IMR-90 (cell line): ENCODE measurements at regions of chr3 and their contacts with region 1.

Region 1: DNA sequence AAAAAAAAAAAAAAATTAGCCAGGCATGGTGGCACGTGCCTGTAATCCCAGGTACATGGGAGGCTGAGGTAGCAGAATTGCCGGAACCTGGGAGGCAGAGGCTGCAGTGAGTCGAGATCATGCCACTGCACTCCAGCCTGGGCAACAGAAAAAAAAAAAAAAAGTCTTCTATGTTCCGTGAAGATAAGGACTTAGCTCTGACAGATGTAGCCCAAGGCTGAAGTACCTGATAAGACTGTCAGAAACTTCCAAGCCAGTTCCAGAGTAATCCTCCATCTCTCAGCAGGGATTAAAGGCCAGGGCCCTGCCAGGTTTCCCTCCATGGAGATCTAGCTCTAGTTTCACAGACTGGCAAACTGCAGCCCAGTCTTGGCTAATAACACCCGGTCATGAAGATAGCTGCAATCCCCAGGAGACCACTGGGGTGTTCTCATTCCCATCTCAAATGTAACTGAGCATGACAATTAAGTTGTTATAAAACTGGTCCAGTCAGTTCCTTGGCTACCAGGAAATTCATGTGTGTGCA is 8.5 kb downstream of the CDCP1 start:
- DNase-seq: no peak
- ATAC-seq: no peak
- H3K4me3 ChIP-seq: no peak overlapping the region
- H3K27ac ChIP-seq: peak overlapping the region; percentile 41
- H3K4me1 ChIP-seq: peaks cover 25% of the 10 kb centered on the region
- H3K27me3 ChIP-seq: no peaks in the 10 kb centered on the region
- CTCF ChIP-seq: no peak
- POLR2A ChIP-seq: no peak
- RAD21 ChIP-seq: no peak

Region 2: DNA sequence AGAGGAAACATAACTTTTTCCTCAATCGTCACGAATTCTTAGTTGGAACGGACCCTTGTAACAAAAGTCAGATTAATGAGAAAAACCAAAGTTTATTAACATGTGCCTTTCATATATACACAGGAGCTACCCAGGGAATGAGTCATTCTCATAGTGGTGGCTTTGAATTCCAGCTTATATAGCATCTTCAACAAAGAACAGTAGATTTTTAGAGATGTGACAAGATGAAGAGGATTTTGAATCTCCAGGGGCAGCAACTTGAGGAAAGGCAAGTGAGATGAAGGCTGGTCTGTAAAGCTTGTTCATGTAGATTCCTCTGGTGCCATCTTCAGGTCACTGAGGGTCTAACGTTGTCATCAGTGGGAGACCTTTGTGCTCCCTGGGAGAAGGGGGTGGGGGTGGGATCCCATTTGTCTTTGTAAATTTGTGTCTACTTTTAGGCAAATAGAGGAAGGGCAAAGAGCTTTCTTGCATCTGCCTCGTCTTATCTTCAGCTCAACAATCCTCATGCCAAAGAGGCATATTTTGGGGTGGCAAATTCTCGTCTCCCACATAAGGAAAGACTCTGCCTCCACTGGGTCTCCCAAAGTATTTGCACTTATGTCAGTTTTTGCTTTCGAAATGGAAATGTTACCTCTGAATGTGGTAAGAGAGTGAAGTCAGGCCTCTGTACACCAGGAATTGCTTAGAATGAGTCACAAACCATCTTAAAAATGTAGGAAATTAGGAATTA is 82.1 kb before region 1 on chr3:
- CTCF ChIA-PET with region 1: no interaction called
- POLR2A ChIA-PET with region 1: no interaction called
- dilution Hi-C with region 1: no loop called
- in situ Hi-C with region 1: no loop called
- intact Hi-C with region 1: loop called (anchors 1 kb)
- DNase-seq: peak; percentile 96
- ATAC-seq: peak; percentile 68
- H3K4me3 ChIP-seq: peak overlapping the region; percentile 44; the same call in 1 of the 2 replicates
- H3K27ac ChIP-seq: peak overlapping the region; percentile 98
- H3K4me1 ChIP-seq: peaks cover 21% of the 10 kb centered on the region
- H3K27me3 ChIP-seq: no peaks in the 10 kb centered on the region
- CTCF ChIP-seq: peak; percentile 20; the same call in 1 of the 2 replicates
- POLR2A ChIP-seq: no peak
- RAD21 ChIP-seq: no peak

Region 3: GRCh38 chr3:45075821-45076625 is 61.7 kb before region 1 on chr3:
- CTCF ChIA-PET with region 1: no interaction called
- POLR2A ChIA-PET with region 1: no interaction called
- dilution Hi-C with region 1: no loop called
- in situ Hi-C with region 1: no loop called
- intact Hi-C with region 1: no loop called
- DNase-seq: no peak
- ATAC-seq: no peak
- H3K4me3 ChIP-seq: no peak overlapping the region
- H3K27ac ChIP-seq: no peak overlapping the region
- H3K4me1 ChIP-seq: no peaks in the 10 kb centered on the region
- H3K27me3 ChIP-seq: no peaks in the 10 kb centered on the region
- CTCF ChIP-seq: no peak
- POLR2A ChIP-seq: no peak
- RAD21 ChIP-seq: no peak

Region 4: GRCh38 chr3:45100981-45101407 is 36.7 kb before region 1 on chr3:
- CTCF ChIA-PET with region 1: no interaction called
- POLR2A ChIA-PET with region 1: no interaction called
- dilution Hi-C with region 1: no loop called
- in situ Hi-C with region 1: no loop called
- intact Hi-C with region 1: no loop called
- DNase-seq: peak; percentile 74
- ATAC-seq: peak; percentile 53
- H3K4me3 ChIP-seq: no peak overlapping the region
- H3K27ac ChIP-seq: no peak overlapping the region
- H3K4me1 ChIP-seq: peaks cover 7% of the 10 kb centered on the region; the same call in 1 of the 2 replicates
- H3K27me3 ChIP-seq: no peaks in the 10 kb centered on the region
- CTCF ChIP-seq: no peak
- POLR2A ChIP-seq: no peak
- RAD21 ChIP-seq: no peak

Region 5: GRCh38 chr3:45199837-45200648 is 62.3 kb after region 1 on chr3:
- CTCF ChIA-PET with region 1: interaction called, 3 read pairs
- POLR2A ChIA-PET with region 1: no interaction called
- dilution Hi-C with region 1: no loop called
- in situ Hi-C with region 1: loop called (anchors 5 kb)
- intact Hi-C with region 1: loop called (anchors 5 kb)
- DNase-seq: peak; percentile 92
- ATAC-seq: peak; percentile 84
- H3K4me3 ChIP-seq: no peak overlapping the region
- H3K27ac ChIP-seq: peak overlapping the region; percentile 59
- H3K4me1 ChIP-seq: peaks cover 20% of the 10 kb centered on the region
- H3K27me3 ChIP-seq: no peaks in the 10 kb centered on the region
- CTCF ChIP-seq: no peak
- POLR2A ChIP-seq: no peak
- RAD21 ChIP-seq: no peak

Region 6: GRCh38 chr3:45205126-45205525 is 67.4 kb after region 1 on chr3:
- CTCF ChIA-PET with region 1: interaction called, 3 read pairs
- POLR2A ChIA-PET with region 1: no interaction called
- dilution Hi-C with region 1: no loop called
- in situ Hi-C with region 1: loop called (anchors 5 kb)
- intact Hi-C with region 1: loop called (anchors 5 kb)
- DNase-seq: peak; percentile 82
- ATAC-seq: peak; percentile 51
- H3K4me3 ChIP-seq: no peak overlapping the region
- H3K27ac ChIP-seq: no peak overlapping the region
- H3K4me1 ChIP-seq: peaks cover 20% of the 10 kb centered on the region
- H3K27me3 ChIP-seq: no peaks in the 10 kb centered on the region
- CTCF ChIP-seq: no peak
- POLR2A ChIP-seq: no peak
- RAD21 ChIP-seq: no peak

Region 7: GRCh38 chr3:45210308-45211041 is 72.8 kb after region 1 on chr3:
- CTCF ChIA-PET with region 1: no interaction called
- POLR2A ChIA-PET with region 1: no interaction called
- dilution Hi-C with region 1: no loop called
- in situ Hi-C with region 1: loop called (anchors 5 kb)
- intact Hi-C with region 1: loop called (anchors 5 kb)
- DNase-seq: peak; percentile 80
- ATAC-seq: peak; percentile 94
- H3K4me3 ChIP-seq: no peak overlapping the region
- H3K27ac ChIP-seq: peak overlapping the region; percentile 53
- H3K4me1 ChIP-seq: peaks cover 16% of the 10 kb centered on the region
- H3K27me3 ChIP-seq: no peaks in the 10 kb centered on the region
- CTCF ChIP-seq: peak; percentile 87
- POLR2A ChIP-seq: no peak
- RAD21 ChIP-seq: peak; percentile 92

Region 8: GRCh38 chr3:45409921-45410320 is 272.2 kb after region 1 on chr3:
- CTCF ChIA-PET with region 1: no interaction called
- POLR2A ChIA-PET with region 1: no interaction called
- dilution Hi-C with region 1: no loop called
- in situ Hi-C with region 1: no loop called
- intact Hi-C with region 1: no loop called
- DNase-seq: no peak
- ATAC-seq: no peak
- H3K4me3 ChIP-seq: no peak overlapping the region
- H3K27ac ChIP-seq: no peak overlapping the region
- H3K4me1 ChIP-seq: no peaks in the 10 kb centered on the region
- H3K27me3 ChIP-seq: no peaks in the 10 kb centered on the region
- CTCF ChIP-seq: no peak
- POLR2A ChIP-seq: no peak
- RAD21 ChIP-seq: no peak

Region 9: GRCh38 chr3:45479621-45480035 is 341.9 kb after region 1 on chr3:
- CTCF ChIA-PET with region 1: no interaction called
- POLR2A ChIA-PET with region 1: no interaction called
- dilution Hi-C with region 1: no loop called
- in situ Hi-C with region 1: no loop called
- intact Hi-C with region 1: no loop called
- DNase-seq: peak; percentile 79
- ATAC-seq: peak; percentile 86
- H3K4me3 ChIP-seq: no peak overlapping the region
- H3K27ac ChIP-seq: peak overlapping the region; percentile 72; the same call in 1 of the 2 replicates
- H3K4me1 ChIP-seq: peaks cover 9% of the 10 kb centered on the region
- H3K27me3 ChIP-seq: no peaks in the 10 kb centered on the region
- CTCF ChIP-seq: no peak
- POLR2A ChIP-seq: no peak
- RAD21 ChIP-seq: no peak